ENCODE measurements at regions of chr12 and their contacts with region 1.

Region 1: GRCh38 chr12:47307680-47308399 is 228.1 kb upstream of the AMIGO2 start:
- DNase-seq: peak; percentile 51
- H3K4me3 Mint-ChIP-seq: no peak overlapping the region
- H3K27ac Mint-ChIP-seq: peak overlapping the region; percentile 2
- H3K4me1 Mint-ChIP-seq: peaks cover 16% of the 10 kb centered on the region
- H3K27me3 Mint-ChIP-seq: no peaks in the 10 kb centered on the region
- CTCF ChIP-seq: peak; percentile 38

Region 2: GRCh38 chr12:47184812-47185211 is 123.0 kb before region 1 on chr12:
- CTCF ChIA-PET with region 1: no interaction called
- intact Hi-C with region 1: loop called (anchors 1 kb)
- DNase-seq: peak; percentile 44
- H3K4me3 Mint-ChIP-seq: no peak overlapping the region
- H3K27ac Mint-ChIP-seq: peak overlapping the region; percentile 53
- H3K4me1 Mint-ChIP-seq: peaks cover 51% of the 10 kb centered on the region
- H3K27me3 Mint-ChIP-seq: no peaks in the 10 kb centered on the region
- CTCF ChIP-seq: no peak

Region 3: DNA sequence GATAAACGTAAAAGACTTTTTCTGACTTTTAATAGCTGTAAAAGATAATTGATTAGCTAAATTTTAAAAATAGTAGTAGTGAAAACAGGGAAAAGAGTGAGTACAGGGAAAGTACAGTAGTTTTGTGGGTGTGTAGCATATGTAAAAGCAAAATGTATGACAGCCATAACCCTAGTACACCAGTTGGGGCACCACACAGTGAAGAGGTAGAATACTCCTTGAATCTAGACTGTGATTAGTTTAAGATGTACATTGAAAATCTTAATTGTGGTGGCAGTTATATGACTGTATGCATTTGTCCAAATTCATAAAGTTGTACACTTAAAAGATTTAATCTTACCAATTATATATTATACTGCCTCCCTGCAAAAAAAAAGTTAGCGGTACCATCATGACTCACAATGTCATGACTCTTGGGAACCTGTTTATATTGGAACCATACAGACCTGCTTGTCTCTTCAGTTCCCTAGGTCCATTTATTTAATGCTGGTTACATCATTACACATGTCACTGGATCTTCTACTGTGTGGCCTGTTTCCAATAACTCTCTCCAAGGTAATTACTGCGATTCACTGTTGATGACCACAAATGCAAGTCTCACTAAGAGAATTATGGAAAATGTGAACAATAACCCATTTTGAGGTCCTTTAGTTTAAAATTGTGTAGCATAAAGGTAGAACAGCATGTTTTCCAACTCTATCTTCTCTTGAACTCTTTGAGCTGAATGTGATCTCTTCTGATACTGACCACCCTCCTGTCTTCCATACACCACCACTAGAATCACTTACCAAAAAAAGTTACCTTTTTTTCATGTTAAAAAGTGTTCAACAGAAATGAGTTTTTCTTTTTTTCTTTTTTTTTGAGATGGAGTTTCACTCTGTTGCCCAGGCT is 36.1 kb after region 1 on chr12:
- CTCF ChIA-PET with region 1: no interaction called
- intact Hi-C with region 1: no loop called
- DNase-seq: no peak
- H3K4me3 Mint-ChIP-seq: no peak overlapping the region
- H3K27ac Mint-ChIP-seq: no peak overlapping the region
- H3K4me1 Mint-ChIP-seq: peaks cover 8% of the 10 kb centered on the region
- H3K27me3 Mint-ChIP-seq: no peaks in the 10 kb centered on the region
- CTCF ChIP-seq: no peak

Region 4: GRCh38 chr12:47361389-47362021 is 53.7 kb after region 1 on chr12:
- CTCF ChIA-PET with region 1: no interaction called
- intact Hi-C with region 1: no loop called
- DNase-seq: no peak
- H3K4me3 Mint-ChIP-seq: no peak overlapping the region
- H3K27ac Mint-ChIP-seq: no peak overlapping the region
- H3K4me1 Mint-ChIP-seq: no peaks in the 10 kb centered on the region
- H3K27me3 Mint-ChIP-seq: no peaks in the 10 kb centered on the region
- CTCF ChIP-seq: no peak